Mammary epithelial cell (primary cell): ENCODE measurements at regions of chr3 and their contacts with region 1.

Region 1: GRCh38 chr3:148962513-148962912 is 28.8 kb upstream of the GYG1 start:
- DNase-seq: peak; percentile 46
- H3K4me3 ChIP-seq: no peak overlapping the region
- H3K27ac ChIP-seq: no peak overlapping the region
- H3K4me1 ChIP-seq: no peaks in the 10 kb centered on the region
- H3K27me3 ChIP-seq: no peaks in the 10 kb centered on the region
- CTCF ChIP-seq: peak; percentile 12 to 29

Region 2: DNA sequence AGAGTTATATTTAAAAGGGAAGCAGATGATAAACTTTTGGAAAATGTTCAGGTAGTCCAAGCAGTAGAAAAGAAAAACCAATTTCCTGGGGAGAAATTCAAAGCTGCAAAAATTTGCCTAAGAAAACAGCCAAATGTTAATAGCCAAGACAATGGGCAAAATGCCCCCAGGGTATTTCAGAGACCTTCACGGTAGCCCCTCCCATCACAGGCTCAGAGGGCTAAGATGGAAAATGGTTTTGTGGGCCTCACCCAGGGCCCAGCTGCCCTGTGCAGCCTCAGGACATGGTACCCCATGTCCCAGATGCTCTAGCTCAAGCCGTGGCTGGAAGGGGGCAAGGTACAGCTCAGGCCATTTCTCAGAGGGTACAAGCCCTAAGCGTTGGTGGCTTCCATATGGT is 1947.2 kb before region 1 on chr3:
- CTCF ChIA-PET with region 1: no interaction called
- dilution Hi-C with region 1: no loop called
- in situ Hi-C with region 1: no loop called
- intact Hi-C with region 1: no loop called
- DNase-seq: no peak
- H3K4me3 ChIP-seq: no peak overlapping the region
- H3K27ac ChIP-seq: no peak overlapping the region
- H3K4me1 ChIP-seq: no peaks in the 10 kb centered on the region
- H3K27me3 ChIP-seq: peaks cover 2% of the 10 kb centered on the region
- CTCF ChIP-seq: no peak

Region 3: DNA sequence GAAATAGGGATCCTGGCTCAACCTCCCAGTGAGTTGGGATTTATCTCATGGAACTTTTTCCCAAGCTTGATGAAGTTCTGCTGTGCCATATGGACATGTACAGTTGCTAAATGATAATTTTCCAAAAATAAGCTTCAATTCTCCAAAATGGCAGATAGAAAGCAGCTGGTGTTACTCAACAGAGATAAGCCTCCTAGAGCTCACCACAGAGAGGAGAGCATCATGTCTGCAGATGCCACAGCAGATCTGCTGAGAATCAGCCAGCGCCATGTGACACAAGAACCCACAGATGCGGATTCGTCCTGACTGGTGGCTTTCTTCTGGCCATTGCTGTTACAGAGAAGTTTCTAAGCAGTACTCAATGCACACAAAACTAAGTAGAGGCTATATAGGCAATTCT is 214.2 kb before region 1 on chr3:
- CTCF ChIA-PET with region 1: no interaction called
- dilution Hi-C with region 1: no loop called
- in situ Hi-C with region 1: no loop called
- intact Hi-C with region 1: no loop called
- DNase-seq: no peak
- H3K4me3 ChIP-seq: no peak overlapping the region
- H3K27ac ChIP-seq: no peak overlapping the region
- H3K4me1 ChIP-seq: no peaks in the 10 kb centered on the region
- H3K27me3 ChIP-seq: no peaks in the 10 kb centered on the region
- CTCF ChIP-seq: no peak

Region 4: GRCh38 chr3:149280671-149281349 is 318.3 kb after region 1 on chr3:
- CTCF ChIA-PET with region 1: no interaction called
- dilution Hi-C with region 1: loop called (anchors 5 kb)
- in situ Hi-C with region 1: loop called in 1 of 2 experiments (anchors 10 kb)
- intact Hi-C with region 1: no loop called
- DNase-seq: no peak
- H3K4me3 ChIP-seq: no peak overlapping the region
- H3K27ac ChIP-seq: no peak overlapping the region
- H3K4me1 ChIP-seq: peaks cover 9% of the 10 kb centered on the region
- H3K27me3 ChIP-seq: no peaks in the 10 kb centered on the region
- CTCF ChIP-seq: no peak